Activated CD4-positive, alpha-beta memory T cell treated with anti-CD3 and anti-CD28 coated beads for 36 hours (primary cell): ENCODE measurements at regions of chr11 and their contacts with region 1.

Region 1: GRCh38 chr11:66408488-66409214 is 12.2 kb upstream of the NPAS4 start:
- DNase-seq: peak; percentile 93
- H3K4me3 Mint-ChIP-seq: peak overlapping the region; percentile 67
- H3K27ac Mint-ChIP-seq: no peak overlapping the region
- H3K4me1 Mint-ChIP-seq: peaks cover 4% of the 10 kb centered on the region
- H3K27me3 Mint-ChIP-seq: peaks cover 17% of the 10 kb centered on the region

Region 2: GRCh38 chr11:66421492-66422205 is 13.0 kb after region 1 on chr11:
- CTCF ChIA-PET with region 1: interaction called, 104 read pairs
- POLR2A ChIA-PET with region 1: no interaction called
- intact Hi-C with region 1: loop called (anchors 1 kb)
- DNase-seq: peak; percentile 92
- H3K4me3 Mint-ChIP-seq: no peak overlapping the region
- H3K27ac Mint-ChIP-seq: no peak overlapping the region
- H3K4me1 Mint-ChIP-seq: peaks cover 27% of the 10 kb centered on the region
- H3K27me3 Mint-ChIP-seq: peaks cover 26% of the 10 kb centered on the region

Region 3: GRCh38 chr11:66429983-66430602 is 21.4 kb after region 1 on chr11:
- CTCF ChIA-PET with region 1: interaction called, 104 read pairs
- POLR2A ChIA-PET with region 1: no interaction called
- intact Hi-C with region 1: loop called (anchors 1 kb)
- DNase-seq: peak; percentile 85
- H3K4me3 Mint-ChIP-seq: no peak overlapping the region
- H3K27ac Mint-ChIP-seq: no peak overlapping the region
- H3K4me1 Mint-ChIP-seq: no peaks in the 10 kb centered on the region
- H3K27me3 Mint-ChIP-seq: no peaks in the 10 kb centered on the region